Spleen (tissue), 13 donors: ENCODE measurements at regions of chr17 and their contacts with region 1.

Region 1: GRCh38 chr17:54680410-54680809 is 220.2 kb upstream of the TOM1L1 start:
- DNase-seq: no peak
- H3K4me3 ChIP-seq: no peak overlapping the region
- H3K27ac ChIP-seq: no peak overlapping the region
- H3K4me1 ChIP-seq: no peaks in the 10 kb centered on the region
- H3K27me3 ChIP-seq: no peaks in the 10 kb centered on the region
- CTCF ChIP-seq: no peak
- POLR2A ChIP-seq: no peak

Region 2: DNA sequence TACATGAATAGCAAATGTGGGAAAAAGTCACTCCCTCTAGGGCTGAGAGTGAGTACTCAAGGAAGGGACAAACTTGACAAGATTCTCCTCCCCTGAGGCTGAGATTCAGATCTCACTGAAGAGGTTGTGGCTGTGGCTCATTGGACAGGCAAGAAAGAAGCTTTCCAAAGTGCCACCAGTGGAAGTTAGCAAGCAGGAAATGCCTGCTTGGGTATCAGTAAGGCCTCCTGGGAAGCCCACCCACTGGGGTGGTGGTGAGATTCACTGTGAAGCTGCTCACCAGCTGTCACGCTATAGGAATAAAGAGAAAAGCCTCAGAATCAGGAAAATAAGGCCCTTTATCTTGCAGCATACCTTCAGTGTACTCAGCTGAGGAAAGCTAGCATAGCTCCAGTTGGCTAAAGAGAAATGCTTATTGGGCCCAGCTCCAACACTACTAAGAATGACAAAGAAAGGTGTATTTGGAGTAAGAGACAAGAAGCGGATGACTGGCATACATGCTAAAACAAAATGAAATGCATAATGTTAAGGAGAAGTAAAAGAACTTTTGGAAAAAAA is 54.2 kb before region 1 on chr17:
- intact Hi-C with region 1: no loop called
- DNase-seq: no peak
- H3K4me3 ChIP-seq: no peak overlapping the region
- H3K27ac ChIP-seq: no peak overlapping the region
- H3K4me1 ChIP-seq: no peaks in the 10 kb centered on the region
- H3K27me3 ChIP-seq: no peaks in the 10 kb centered on the region
- CTCF ChIP-seq: no peak
- POLR2A ChIP-seq: no peak

Region 3: GRCh38 chr17:54736573-54736972 is 56.2 kb after region 1 on chr17:
- intact Hi-C with region 1: no loop called
- DNase-seq: no peak
- H3K4me3 ChIP-seq: no peak overlapping the region
- H3K27ac ChIP-seq: no peak overlapping the region
- H3K4me1 ChIP-seq: no peaks in the 10 kb centered on the region
- H3K27me3 ChIP-seq: no peaks in the 10 kb centered on the region
- CTCF ChIP-seq: no peak
- POLR2A ChIP-seq: no peak

Region 4: GRCh38 chr17:54760836-54761235 is 80.4 kb after region 1 on chr17:
- intact Hi-C with region 1: loop called (anchors 10 kb)
- DNase-seq: no peak
- H3K4me3 ChIP-seq: no peak overlapping the region
- H3K27ac ChIP-seq: no peak overlapping the region
- H3K4me1 ChIP-seq: no peaks in the 10 kb centered on the region
- H3K27me3 ChIP-seq: peaks cover 0 to 4% (median 0%) of the 10 kb centered on the region in 7 donors
- CTCF ChIP-seq: no peak
- POLR2A ChIP-seq: no peak

Region 5: DNA sequence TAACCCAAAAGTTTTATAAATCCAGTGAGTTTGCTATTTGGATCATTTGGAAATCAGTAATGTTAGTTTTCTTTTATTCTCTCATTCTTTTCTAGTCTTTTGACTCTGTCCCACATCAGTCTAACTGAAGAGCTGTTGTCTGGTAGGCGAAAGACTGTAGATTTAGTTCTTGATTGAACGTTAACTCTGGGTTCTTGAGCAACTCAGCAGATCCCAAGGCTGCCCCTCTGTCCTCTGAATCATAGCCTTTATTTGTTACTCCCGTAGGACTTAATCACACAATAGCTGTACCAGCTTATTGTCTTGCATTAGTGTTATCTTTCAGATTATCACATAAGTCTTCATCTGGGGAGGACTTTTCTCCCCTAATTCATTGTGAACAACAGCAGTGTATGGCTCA is 101.0 kb after region 1 on chr17:
- intact Hi-C with region 1: no loop called
- DNase-seq: no peak
- H3K4me3 ChIP-seq: no peak overlapping the region
- H3K27ac ChIP-seq: no peak overlapping the region
- H3K4me1 ChIP-seq: no peaks in the 10 kb centered on the region
- H3K27me3 ChIP-seq: no peaks in the 10 kb centered on the region
- CTCF ChIP-seq: no peak
- POLR2A ChIP-seq: no peak